ENCODE measurements at regions of chr3 and their contacts with region 1.

Region 1: GRCh38 chr3:120816728-120817127 is 74.2 kb downstream of the GTF2E1 start:
- DNase-seq: no peak
- CTCF ChIP-seq: no peak

Region 2: DNA sequence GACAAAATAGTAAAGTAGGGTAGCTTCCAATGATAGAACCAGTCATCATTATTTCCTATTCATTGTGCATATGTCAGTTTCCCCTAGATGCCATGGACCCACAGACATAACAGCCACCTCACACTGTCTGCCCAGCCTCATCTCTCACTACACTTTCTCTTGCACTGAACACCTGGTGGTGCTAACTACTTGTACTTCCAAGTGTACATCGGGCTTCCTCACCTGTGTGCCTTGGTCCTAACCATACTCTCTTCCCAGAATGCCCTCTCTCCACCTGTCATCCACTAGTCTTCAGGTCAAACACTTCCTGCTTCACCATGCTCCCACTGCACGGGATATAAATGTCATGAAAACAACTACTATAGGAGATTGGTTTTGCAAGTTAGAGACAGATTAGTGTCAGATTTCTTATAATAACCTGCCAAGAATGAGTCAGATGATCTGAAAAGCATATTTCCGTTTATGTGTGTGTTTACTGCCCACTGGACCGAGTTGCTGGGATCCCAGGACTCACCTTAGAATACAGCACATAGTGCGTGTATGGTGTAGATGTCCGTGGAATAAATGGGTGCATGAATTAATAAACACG is 1197.7 kb before region 1 on chr3:
- in situ Hi-C with region 1: no loop called
- DNase-seq: no peak
- CTCF ChIP-seq: no peak

Region 3: DNA sequence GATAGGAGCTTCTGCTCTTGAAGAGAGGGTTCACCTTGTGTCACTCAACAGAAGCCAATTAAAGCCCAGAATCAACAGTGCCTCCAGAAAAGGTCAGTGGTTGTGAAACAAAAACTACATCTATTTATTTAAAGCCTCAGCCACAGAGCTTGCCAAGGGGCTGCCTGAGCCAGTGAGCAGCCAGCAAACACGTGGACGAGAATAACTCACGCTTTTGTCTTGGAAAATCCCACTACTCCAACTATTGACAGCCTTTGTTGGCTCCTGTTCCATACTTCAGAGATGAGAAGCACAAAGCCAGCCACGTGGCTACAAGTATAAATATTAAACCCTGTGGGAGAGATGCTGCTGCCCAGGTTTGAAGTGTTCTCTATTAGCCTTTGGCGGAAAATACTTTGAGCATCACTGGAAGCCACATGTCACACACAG is 542.0 kb before region 1 on chr3:
- in situ Hi-C with region 1: loop called (anchors 25 kb)
- DNase-seq: no peak
- CTCF ChIP-seq: no peak

Region 4: DNA sequence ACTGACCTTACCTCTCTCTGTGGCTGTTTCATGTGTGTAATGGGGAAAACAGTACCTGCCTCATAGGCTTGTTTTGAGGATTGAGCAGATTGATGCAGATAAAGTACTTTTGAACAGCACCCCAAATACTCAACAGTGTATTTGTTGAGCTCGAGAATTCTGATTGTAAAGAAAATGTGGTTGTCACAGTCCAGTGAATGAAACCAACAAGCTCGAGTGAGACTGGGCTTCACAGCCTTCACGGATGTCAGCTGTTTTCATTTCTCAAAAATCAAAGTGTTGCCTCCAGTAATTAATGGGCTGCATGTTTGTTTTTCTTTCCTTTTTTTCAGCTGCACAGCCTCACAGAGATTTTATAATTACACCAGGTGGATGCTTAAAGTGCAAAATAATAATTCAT is 1804.4 kb after region 1 on chr3:
- in situ Hi-C with region 1: no loop called
- DNase-seq: peak; percentile 37
- CTCF ChIP-seq: no peak

Measured in GM13976 (cell line).